ENCODE measurements at regions of chr6 and their contacts with region 1.

Region 1: DNA sequence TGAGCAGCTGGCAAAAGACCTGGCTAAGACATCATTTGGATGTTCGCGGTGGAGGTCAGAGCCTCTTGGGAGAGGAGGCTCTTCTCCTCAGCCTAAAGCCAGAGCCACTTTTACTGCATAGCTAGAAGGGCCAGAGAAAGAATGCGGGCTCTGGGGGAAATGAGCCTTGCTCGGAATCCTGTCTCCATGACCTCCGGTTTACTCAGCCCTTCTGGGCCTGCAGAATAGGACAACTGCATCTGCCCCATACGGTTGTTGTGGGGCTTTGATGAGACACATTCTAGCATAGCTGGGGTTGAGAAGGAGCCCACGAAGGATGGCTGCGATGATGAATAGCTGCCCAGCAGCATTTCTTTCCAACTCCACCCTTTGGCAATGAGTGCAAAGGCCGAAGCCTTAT is 115.0 kb upstream of the SLC22A23 start:
- DNase-seq: no peak
- H3K4me3 ChIP-seq: no peak overlapping the region
- H3K27ac ChIP-seq: no peak overlapping the region
- H3K4me1 ChIP-seq: no peaks in the 10 kb centered on the region
- H3K27me3 ChIP-seq: no peaks in the 10 kb centered on the region
- CTCF ChIP-seq: no peak
- POLR2A ChIP-seq: no peak

Region 2: GRCh38 chr6:3500262-3501016 is 71.4 kb before region 1 on chr6:
- intact Hi-C with region 1: loop called (anchors 2 kb)
- DNase-seq: no peak
- H3K4me3 ChIP-seq: peak overlapping the region in 1 of 3 donors; percentile 10
- H3K27ac ChIP-seq: peak overlapping the region; percentile 63 to 77
- H3K4me1 ChIP-seq: no peaks in the 10 kb centered on the region
- H3K27me3 ChIP-seq: no peaks in the 10 kb centered on the region
- CTCF ChIP-seq: no peak
- POLR2A ChIP-seq: no peak

Region 3: GRCh38 chr6:3742426-3743344 is 170.8 kb after region 1 on chr6:
- intact Hi-C with region 1: no loop called
- DNase-seq: peak; percentile 85 to 94
- H3K4me3 ChIP-seq: peak overlapping the region; percentile 0 to 43 (median 5)
- H3K27ac ChIP-seq: peak overlapping the region; percentile 75 to 87
- H3K4me1 ChIP-seq: peaks cover 7 to 8% of the 10 kb centered on the region in 2 donors
- H3K27me3 ChIP-seq: no peaks in the 10 kb centered on the region
- CTCF ChIP-seq: peak; percentile 96 to 99 (median 99)
- POLR2A ChIP-seq: no peak

Measured in breast epithelium (tissue), 4 donors.